HEK293 (cell line): ENCODE measurements at regions of chr22 and their contacts with region 1.

Region 1: DNA sequence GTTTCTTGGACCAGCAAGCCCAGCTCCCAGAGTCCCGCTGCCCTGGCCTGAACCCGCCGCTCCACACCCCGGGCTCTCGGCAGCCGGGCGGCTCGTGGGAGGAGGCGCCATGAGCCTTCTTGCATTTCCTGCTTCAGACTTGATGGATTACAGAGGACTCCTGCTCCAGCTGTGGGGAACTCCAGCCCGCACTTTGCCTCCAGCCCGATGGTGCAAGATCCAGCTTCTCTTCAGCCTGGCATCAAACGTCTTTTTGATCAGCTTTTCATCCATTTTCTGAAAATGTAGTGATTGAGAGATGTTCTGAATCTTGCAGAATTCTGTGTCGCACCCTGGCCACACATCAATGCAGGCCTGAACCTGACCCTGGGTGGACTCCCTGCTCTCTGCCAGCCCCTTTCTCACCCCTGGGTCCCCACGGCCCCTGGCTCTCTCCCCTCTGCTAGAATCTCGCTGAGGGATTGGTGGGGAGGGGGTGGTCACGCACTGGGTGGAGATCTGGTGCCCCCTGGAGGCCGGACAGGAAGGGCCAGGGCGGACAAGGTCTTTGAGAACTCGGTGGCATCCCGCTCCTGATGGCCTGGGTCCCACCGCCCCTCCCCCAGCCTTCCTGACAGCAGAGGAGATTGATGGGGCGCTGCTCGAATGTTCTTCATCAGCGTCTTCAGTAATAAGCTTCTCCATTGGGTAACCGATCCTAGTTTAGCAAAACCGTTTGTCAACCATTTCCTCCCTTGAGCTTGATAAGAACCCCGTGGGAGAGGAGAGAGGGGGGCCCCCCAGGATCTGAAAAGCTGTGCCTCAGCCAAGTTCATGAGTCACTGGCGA is 12.1 kb upstream of the NFAM1 start:
- H3K4me3 ChIP-seq: peak overlapping the region; percentile 34
- H3K27ac ChIP-seq: peak overlapping the region; percentile 13
- H3K4me1 ChIP-seq: peaks cover 8% of the 10 kb centered on the region
- CTCF ChIP-seq: peak; percentile 81

Region 2: GRCh38 chr22:41899992-41900651 is 544.2 kb before region 1 on chr22:
- CTCF ChIA-PET with region 1: no interaction called
- POLR2A ChIA-PET with region 1: no interaction called
- H3K4me3 ChIP-seq: no peak overlapping the region
- H3K27ac ChIP-seq: no peak overlapping the region
- H3K4me1 ChIP-seq: no peaks in the 10 kb centered on the region
- CTCF ChIP-seq: no peak

Region 3: DNA sequence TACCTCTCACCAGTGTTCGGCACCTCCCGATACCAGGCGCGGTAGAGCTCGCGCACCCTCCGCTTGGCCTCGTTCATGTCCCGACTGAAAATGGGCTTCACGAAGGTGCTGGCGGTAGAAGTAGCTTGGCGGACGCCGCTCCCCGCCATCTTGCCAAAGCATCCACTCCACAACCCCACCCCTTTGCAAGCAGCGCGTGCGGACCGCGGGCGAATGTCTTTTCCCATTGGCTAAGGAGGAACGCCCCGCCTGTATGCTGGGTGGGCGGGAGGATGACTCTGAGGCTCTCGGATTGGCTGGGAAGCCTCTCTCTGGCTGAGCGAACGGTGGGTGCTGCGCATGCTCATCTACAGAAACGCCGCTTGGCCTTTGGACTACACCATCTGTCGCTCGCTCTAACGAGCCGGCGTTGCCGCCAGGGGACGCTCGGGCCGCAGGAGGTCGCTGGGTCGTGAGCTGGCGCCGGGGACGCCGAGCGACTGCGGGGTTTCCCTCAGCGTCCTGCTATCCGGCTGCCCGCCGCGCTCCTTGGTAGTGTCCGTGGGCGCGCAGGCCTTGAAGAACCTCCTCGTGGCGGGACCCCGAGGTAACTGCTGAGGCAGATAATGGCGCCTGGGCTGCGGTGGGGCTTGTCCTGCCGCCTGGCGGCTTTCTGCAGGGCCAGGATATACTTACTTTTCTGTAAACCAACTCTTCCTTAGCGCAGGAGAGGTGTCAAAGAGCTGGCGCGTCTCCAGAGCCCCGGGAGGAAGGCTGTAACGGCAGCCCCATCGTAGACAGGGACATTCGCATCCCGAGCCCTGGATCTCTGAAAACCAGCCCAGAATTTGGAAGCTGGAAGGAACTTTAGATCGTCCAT is 353.5 kb before region 1 on chr22 and contains the start of gene NDUFA6:
- CTCF ChIA-PET with region 1: interaction called, 17 read pairs
- POLR2A ChIA-PET with region 1: no interaction called
- H3K4me3 ChIP-seq: peak within 1 kb of the TSS; percentile 96
- H3K27ac ChIP-seq: peak within 1 kb of the TSS; percentile 78
- H3K4me1 ChIP-seq: no peaks in the 10 kb centered on the region
- CTCF ChIP-seq: peak; percentile 100

Region 4: GRCh38 chr22:42162728-42163489 is 281.4 kb before region 1 on chr22:
- CTCF ChIA-PET with region 1: interaction called, 20 read pairs
- POLR2A ChIA-PET with region 1: no interaction called
- H3K4me3 ChIP-seq: no peak overlapping the region
- H3K27ac ChIP-seq: no peak overlapping the region
- H3K4me1 ChIP-seq: no peaks in the 10 kb centered on the region
- CTCF ChIP-seq: no peak

Region 5: GRCh38 chr22:42169055-42169469 is 275.2 kb before region 1 on chr22:
- CTCF ChIA-PET with region 1: interaction called, 30 read pairs
- POLR2A ChIA-PET with region 1: no interaction called
- H3K4me3 ChIP-seq: no peak overlapping the region
- H3K27ac ChIP-seq: no peak overlapping the region
- H3K4me1 ChIP-seq: peaks cover 11% of the 10 kb centered on the region
- CTCF ChIP-seq: peak; percentile 98

Region 6: DNA sequence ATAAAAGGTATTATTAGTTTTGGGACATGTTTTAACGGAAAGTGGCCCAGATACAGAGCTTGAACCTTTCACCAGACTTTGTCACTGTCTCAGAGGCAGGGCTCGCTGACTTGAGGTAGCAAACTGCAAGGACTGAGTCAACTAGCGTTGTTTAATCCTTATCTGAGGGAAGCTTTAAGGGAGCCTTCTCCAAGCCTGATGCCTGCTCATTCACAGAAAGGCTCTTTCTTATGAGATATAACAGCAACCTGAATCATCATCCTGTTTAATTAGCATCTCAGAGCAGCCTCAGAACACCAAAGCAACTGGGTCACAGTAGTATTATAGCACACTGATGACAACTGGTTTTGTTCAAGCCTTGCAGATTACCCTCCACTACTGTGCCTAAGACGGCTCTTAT is 259.4 kb before region 1 on chr22:
- CTCF ChIA-PET with region 1: interaction called, 11 read pairs
- POLR2A ChIA-PET with region 1: no interaction called
- H3K4me3 ChIP-seq: no peak overlapping the region
- H3K27ac ChIP-seq: no peak overlapping the region
- H3K4me1 ChIP-seq: no peaks in the 10 kb centered on the region
- CTCF ChIP-seq: no peak

Region 7: GRCh38 chr22:42462016-42462415 is 17.7 kb after region 1 on chr22:
- CTCF ChIA-PET with region 1: interaction called, 26 read pairs
- POLR2A ChIA-PET with region 1: interaction called, 4 read pairs
- H3K4me3 ChIP-seq: no peak overlapping the region
- H3K27ac ChIP-seq: no peak overlapping the region
- H3K4me1 ChIP-seq: peaks cover 18% of the 10 kb centered on the region
- CTCF ChIP-seq: no peak

Region 8: GRCh38 chr22:42473484-42474193 is 29.3 kb after region 1 on chr22:
- CTCF ChIA-PET with region 1: interaction called, 33 read pairs
- POLR2A ChIA-PET with region 1: no interaction called
- H3K4me3 ChIP-seq: no peak overlapping the region
- H3K27ac ChIP-seq: no peak overlapping the region
- H3K4me1 ChIP-seq: no peaks in the 10 kb centered on the region
- CTCF ChIP-seq: peak; percentile 38; the same call in 1 of the 2 replicates